ENCODE measurements at regions of chr1 and their contacts with region 1.

Region 1: GRCh38 chr1:196651637-196652215 is at the start of gene CFH:
- DNase-seq: peak in 1 of 2 donors; percentile 10
- ATAC-seq: peak in 7 of 8 donors; percentile 47 to 83 (median 74)
- H3K4me3 ChIP-seq: peak within 1 kb of the TSS in 9 of 10 donors; percentile 2 to 53 (median 39)
- H3K27ac ChIP-seq: peak within 1 kb of the TSS in 7 of 10 donors; percentile 36 to 78 (median 56)
- H3K4me1 ChIP-seq: peaks cover 0 to 5% (median 0%) of the 10 kb centered on the region in 9 donors
- H3K27me3 ChIP-seq: no peaks in the 10 kb centered on the region
- CTCF ChIP-seq: no peak
- total RNA-seq, gene CFH: 12.7 to 50.5 (median 28.5) TPM

Region 2: DNA sequence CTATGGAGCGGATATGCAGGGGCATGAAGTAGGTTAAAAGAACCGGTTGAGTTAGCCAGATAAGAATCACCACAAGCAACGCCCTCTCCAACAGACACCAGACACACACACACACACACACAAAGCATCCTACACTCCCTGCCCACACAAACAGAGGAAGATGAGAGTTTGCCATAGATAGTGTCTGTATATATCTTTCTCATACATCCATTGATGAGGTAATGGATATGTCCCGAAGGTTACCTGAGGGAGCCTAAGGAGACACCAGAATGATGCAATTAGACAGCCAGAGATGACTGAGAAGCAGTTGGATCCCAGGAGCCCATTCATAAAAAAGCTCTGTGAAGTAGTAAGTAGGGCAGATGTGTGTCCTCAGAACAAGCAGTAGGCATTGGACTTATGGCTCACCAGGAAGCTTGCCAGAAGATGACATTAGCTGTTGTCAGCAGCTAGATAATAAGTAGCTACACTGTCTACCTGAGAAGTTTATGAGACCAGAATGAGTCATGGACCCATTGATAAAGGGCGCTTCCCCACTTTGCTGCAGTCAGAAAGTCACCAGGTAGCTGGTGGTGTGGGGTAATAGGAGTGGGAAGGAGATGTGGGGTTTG is 290.5 kb before region 1 on chr1:
- intact Hi-C with region 1: loop called in 1 of 10 experiments (anchors 5 kb)
- DNase-seq: no peak
- ATAC-seq: no peak
- H3K4me3 ChIP-seq: no peak overlapping the region
- H3K27ac ChIP-seq: no peak overlapping the region
- H3K4me1 ChIP-seq: no peaks in the 10 kb centered on the region
- H3K27me3 ChIP-seq: no peaks in the 10 kb centered on the region
- CTCF ChIP-seq: no peak